ENCODE measurements at regions of chr17 and their contacts with region 1.

Region 1: DNA sequence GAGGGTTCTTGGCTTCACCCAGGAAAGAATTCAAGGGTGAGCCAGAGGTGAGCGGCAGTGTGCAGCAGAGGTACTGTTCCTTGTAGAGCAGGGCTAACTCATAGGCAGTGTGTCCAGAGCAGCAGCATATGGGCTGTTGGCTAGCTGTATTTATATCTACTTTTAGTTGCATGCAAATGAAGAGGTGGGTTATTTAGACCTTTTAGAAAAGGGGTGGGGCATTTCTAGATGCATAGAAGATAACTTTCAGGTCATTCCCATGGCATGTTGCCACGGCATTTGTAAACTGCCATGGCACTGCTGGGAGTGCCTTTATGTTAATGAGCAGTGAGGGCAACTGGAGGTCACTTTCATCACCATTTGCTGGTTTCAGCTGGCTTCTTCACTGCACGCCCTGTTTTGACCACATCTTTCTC is 141.0 kb downstream of the STX8 start:
- DNase-seq: peak in 1 of 2 experiments; percentile 50
- H3K4me3 ChIP-seq: no peak overlapping the region
- H3K27ac ChIP-seq: no peak overlapping the region
- H3K4me1 ChIP-seq: 0 out of 2 replicates have a peak, but pooled peaks cover 7% of the 10 kb centered on the region
- H3K27me3 ChIP-seq: no peaks in the 10 kb centered on the region
- CTCF ChIP-seq: no peak

Region 2: DNA sequence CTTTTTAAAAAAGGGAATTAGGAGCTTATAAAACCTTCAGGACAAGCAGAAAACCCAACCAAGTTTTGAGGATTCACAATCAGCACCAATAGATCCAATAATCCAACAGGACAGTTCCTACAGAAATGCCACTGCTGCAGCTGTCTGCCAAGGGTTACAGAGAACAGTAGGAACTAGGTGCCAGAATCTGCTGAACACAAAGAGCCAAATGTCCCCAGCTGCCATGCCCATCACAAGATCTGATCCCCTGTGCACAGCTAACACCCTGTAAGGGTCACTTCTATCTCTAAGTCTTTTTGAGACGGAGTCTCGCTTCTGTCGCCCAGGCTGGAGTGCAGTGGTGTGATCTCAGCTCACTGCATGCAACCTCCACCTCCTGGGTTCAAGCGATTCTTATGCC is 121.3 kb before region 1 on chr17:
- CTCF ChIA-PET with region 1: no interaction called
- POLR2A ChIA-PET with region 1: interaction called, 10 read pairs
- intact Hi-C with region 1: no loop called
- DNase-seq: no peak
- H3K4me3 ChIP-seq: no peak overlapping the region
- H3K27ac ChIP-seq: no peak overlapping the region
- H3K4me1 ChIP-seq: no peaks in the 10 kb centered on the region
- H3K27me3 ChIP-seq: no peaks in the 10 kb centered on the region
- CTCF ChIP-seq: no peak

Measured in PC-9 (cell line).